Activated naive CD4-positive, alpha-beta T cell treated with anti-CD3 and anti-CD28 coated beads, Interleukin-2, amount 10 ng/mL, durations not matched to agents 7 days and 5 days (primary cell): ENCODE measurements at regions of chr1 and their contacts with region 1.

Region 1: GRCh38 chr1:52686830-52687229 is 11.3 kb downstream of the COA7 start:
- DNase-seq: no peak
- H3K4me3 Mint-ChIP-seq: no peak overlapping the region
- H3K27ac Mint-ChIP-seq: no peak overlapping the region
- H3K4me1 Mint-ChIP-seq: peaks cover 24% of the 10 kb centered on the region
- H3K27me3 Mint-ChIP-seq: no peaks in the 10 kb centered on the region

Region 2: DNA sequence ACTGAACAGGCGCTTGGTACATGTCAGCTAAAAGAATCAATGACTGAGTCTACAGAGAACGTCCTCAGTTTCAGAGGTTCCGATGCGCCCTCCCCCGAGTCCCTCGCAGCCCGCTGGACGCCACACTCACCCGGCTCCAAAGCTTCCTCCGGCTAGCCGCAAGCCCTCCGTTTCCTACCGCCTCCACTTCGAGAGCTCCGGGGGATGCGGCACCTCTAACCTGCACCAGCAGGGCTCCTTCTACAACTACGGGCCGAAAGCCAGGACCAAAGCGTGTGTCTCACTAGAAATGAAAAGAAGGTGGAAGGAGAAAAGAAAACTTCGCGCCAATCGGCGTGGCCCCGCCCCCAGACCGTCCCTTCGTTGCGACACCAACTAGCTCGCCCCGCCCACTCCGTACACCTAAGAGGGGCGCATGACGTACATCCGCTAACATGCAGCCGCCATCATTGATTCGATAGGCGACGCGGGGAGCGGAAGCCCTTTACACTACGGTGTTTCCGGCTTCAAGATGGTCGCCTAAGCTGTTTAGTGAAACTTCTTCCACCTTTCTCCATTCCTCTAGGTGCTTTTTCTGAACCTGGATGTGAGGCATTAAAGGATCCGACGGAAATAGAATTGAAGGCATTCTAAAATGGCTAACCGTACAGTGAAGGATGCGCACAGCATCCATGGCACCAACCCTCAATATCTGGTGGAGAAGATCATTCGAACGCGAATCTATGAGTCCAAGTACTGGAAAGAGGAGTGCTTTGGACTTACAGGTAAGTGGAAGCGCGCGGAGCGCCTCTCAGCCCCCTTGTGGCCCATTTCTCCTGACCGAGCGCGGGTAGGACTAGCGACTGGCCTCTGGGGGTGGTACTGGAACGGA is 282.5 kb before region 1 on chr1 and contains the starts of genes ORC1 and PRPF38A:
- CTCF ChIA-PET with region 1: interaction called, 15 read pairs
- DNase-seq: peak; percentile 99
- H3K4me3 Mint-ChIP-seq: peak within 1 kb of the TSS; percentile 99
- H3K27ac Mint-ChIP-seq: peak within 1 kb of the TSS; percentile 99
- H3K4me1 Mint-ChIP-seq: peaks cover 65% of the 10 kb centered on the region
- H3K27me3 Mint-ChIP-seq: no peaks in the 10 kb centered on the region

Region 3: GRCh38 chr1:52636721-52637695 is 49.8 kb before region 1 on chr1:
- CTCF ChIA-PET with region 1: interaction called, 19 read pairs
- DNase-seq: peak; percentile 83
- H3K4me3 Mint-ChIP-seq: peak overlapping the region; percentile 66
- H3K27ac Mint-ChIP-seq: peak overlapping the region; percentile 99
- H3K4me1 Mint-ChIP-seq: peaks cover 82% of the 10 kb centered on the region
- H3K27me3 Mint-ChIP-seq: peaks cover 6% of the 10 kb centered on the region

Region 4: DNA sequence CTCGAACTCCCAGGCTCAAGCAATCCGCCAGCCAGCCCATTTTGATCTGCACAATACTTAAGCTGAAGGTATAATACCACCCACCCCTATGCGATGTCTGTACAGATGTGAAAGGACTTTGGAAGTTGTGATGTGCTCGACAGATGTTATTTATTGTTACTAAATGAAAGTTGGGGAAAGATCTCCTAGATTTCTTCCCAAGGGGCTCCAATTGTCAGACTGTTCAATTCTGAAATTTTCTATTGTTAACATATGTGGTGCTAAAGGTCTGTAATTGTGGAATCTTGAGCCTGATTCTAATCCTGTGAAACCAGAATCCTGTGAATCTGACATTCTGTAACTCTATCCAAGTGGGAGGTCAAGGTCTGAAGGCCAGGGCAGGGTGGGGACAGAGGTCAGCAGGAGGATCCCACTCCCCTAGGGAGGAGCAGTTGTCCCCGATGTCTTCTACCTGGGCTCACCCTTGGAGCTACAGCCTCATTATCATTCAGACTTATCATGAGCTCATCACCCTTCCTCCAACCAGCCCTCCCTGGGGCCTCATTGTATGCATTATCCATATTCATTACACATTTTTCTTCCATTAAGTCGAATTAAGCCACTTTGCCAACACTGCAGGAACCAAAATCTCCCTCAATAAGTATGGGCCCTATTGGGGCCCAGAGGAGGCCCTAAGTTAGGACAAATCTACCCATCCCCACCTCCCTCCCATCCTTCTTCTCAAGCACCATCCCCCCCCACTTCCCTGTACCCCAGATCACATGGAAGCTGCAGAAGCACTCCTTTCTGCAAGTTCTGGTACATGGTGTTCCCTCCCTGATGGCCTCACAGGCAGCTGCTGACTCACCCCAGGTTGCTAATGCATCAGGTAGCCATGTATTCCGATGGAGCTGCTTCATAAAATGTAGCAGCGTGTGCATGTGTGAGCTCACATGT is 21.6 kb before region 1 on chr1:
- CTCF ChIA-PET with region 1: interaction called, 10 read pairs
- DNase-seq: no peak
- H3K4me3 Mint-ChIP-seq: no peak overlapping the region
- H3K27ac Mint-ChIP-seq: no peak overlapping the region
- H3K4me1 Mint-ChIP-seq: peaks cover 15% of the 10 kb centered on the region
- H3K27me3 Mint-ChIP-seq: no peaks in the 10 kb centered on the region